SK-N-SH (cell line): ENCODE measurements at regions of chr18 and their contacts with region 1.

Region 1: GRCh38 chr18:7021994-7022840 is 95.4 kb downstream of the LAMA1 start:
- DNase-seq: peak; percentile 83
- H3K4me3 ChIP-seq: no peak overlapping the region
- H3K27ac ChIP-seq: no peak overlapping the region
- H3K4me1 ChIP-seq: peaks cover 0 to 2% of the 10 kb centered on the region in 2 experiments; a peak in 1 of 4 replicates
- H3K27me3 ChIP-seq: no peaks in the 10 kb centered on the region
- CTCF ChIP-seq: peak; percentile 44
- EP300 ChIP-seq: no peak
- RAD21 ChIP-seq: peak; percentile 88

Region 2: GRCh38 chr18:6648581-6648980 is 373.6 kb before region 1 on chr18:
- CTCF ChIA-PET with region 1: no interaction called
- POLR2A ChIA-PET with region 1: no interaction called
- DNase-seq: no peak
- H3K4me3 ChIP-seq: no peak overlapping the region
- H3K27ac ChIP-seq: no peak overlapping the region
- H3K4me1 ChIP-seq: no peaks in the 10 kb centered on the region
- H3K27me3 ChIP-seq: no peaks in the 10 kb centered on the region; the same call in 1 of the 2 replicates
- CTCF ChIP-seq: no peak
- EP300 ChIP-seq: no peak
- RAD21 ChIP-seq: no peak

Region 3: DNA sequence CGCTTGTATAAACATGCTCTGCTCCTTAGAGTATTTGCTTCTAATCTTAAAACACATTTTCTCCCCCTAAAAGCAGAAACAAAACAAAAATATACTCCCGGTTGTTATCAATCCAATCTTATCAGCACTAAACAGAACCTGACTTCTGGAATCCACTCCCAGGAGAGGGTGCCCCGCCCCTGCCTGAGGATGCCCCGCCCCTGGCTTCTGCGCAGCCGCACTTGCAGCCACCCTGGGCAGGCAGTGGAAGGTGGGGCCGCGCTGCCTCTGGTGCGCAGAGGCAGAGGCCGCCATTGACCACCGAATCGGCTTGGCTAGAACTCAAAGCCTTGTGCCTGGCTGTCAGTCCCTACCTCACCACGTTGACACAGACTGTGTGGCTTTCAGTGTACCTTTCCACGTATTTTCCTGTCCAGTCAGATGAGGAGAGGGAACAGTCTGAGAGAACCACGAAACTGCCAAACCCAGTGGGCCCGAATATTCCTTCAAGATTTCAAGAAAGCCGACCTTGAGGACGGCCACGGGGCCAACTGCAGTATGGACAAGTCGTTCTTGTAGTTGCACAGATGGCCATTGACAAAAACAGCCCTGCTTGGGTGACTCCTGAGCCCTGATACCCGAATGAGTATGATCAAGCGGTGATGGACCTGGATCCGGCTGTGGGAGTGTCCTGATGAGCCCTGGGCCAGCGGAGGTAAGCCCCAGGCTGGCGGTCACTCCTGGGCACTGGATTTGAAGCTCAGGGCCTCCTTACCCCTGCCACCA is 338.9 kb before region 1 on chr18:
- CTCF ChIA-PET with region 1: no interaction called
- POLR2A ChIA-PET with region 1: no interaction called
- DNase-seq: peak; percentile 44
- H3K4me3 ChIP-seq: no peak overlapping the region
- H3K27ac ChIP-seq: no peak overlapping the region
- H3K4me1 ChIP-seq: peaks cover 0 to 4% of the 10 kb centered on the region in 2 experiments; a peak in 1 of 4 replicates
- H3K27me3 ChIP-seq: no peaks in the 10 kb centered on the region; the same call in 1 of the 2 replicates
- CTCF ChIP-seq: no peak
- EP300 ChIP-seq: no peak
- RAD21 ChIP-seq: no peak

Region 4: GRCh38 chr18:6885992-6886796 is 136.0 kb before region 1 on chr18:
- CTCF ChIA-PET with region 1: interaction called, 11 read pairs
- POLR2A ChIA-PET with region 1: no interaction called
- DNase-seq: peak; percentile 65
- H3K4me3 ChIP-seq: no peak overlapping the region
- H3K27ac ChIP-seq: no peak overlapping the region
- H3K4me1 ChIP-seq: no peaks in the 10 kb centered on the region
- H3K27me3 ChIP-seq: no peaks in the 10 kb centered on the region
- CTCF ChIP-seq: peak; percentile 84
- EP300 ChIP-seq: no peak
- RAD21 ChIP-seq: peak; percentile 98

Region 5: GRCh38 chr18:6941996-6942395 is 80.2 kb before region 1 on chr18:
- CTCF ChIA-PET with region 1: interaction called, 10 read pairs
- POLR2A ChIA-PET with region 1: no interaction called
- DNase-seq: no peak
- H3K4me3 ChIP-seq: no peak overlapping the region
- H3K27ac ChIP-seq: no peak overlapping the region
- H3K4me1 ChIP-seq: peaks cover 0 to 7% of the 10 kb centered on the region in 2 experiments; a peak in 1 of 4 replicates
- H3K27me3 ChIP-seq: no peaks in the 10 kb centered on the region
- CTCF ChIP-seq: no peak
- EP300 ChIP-seq: no peak
- RAD21 ChIP-seq: no peak

Region 6: GRCh38 chr18:7038330-7038851 is 16.2 kb after region 1 on chr18:
- CTCF ChIA-PET with region 1: interaction called, 18 read pairs
- POLR2A ChIA-PET with region 1: no interaction called
- DNase-seq: peak; percentile 44
- H3K4me3 ChIP-seq: no peak overlapping the region; a peak in 1 of 4 replicates
- H3K27ac ChIP-seq: no peak overlapping the region
- H3K4me1 ChIP-seq: no peaks in the 10 kb centered on the region
- H3K27me3 ChIP-seq: no peaks in the 10 kb centered on the region
- CTCF ChIP-seq: peak; percentile 50
- EP300 ChIP-seq: no peak
- RAD21 ChIP-seq: peak; percentile 55

Region 7: DNA sequence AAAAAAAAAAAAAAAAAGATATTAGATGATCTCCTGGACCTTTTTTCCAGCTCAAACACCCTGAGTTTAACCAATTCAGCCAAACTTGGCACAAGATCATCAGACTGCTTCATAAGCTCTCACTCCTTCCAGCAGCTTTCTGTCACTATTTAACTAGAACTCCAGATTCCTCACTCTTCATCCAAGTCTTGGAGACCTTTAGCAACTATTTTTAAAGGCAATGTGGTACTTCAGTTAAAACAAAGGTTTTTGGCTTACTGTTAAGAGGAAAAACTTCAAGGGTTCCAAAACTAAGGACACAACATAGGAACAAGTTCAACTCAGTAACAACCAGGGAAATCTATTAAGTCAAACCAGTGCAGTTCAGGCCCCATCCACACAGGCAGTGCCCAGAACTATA is 72.2 kb after region 1 on chr18:
- CTCF ChIA-PET with region 1: no interaction called
- POLR2A ChIA-PET with region 1: no interaction called
- DNase-seq: no peak
- H3K4me3 ChIP-seq: no peak overlapping the region
- H3K27ac ChIP-seq: no peak overlapping the region
- H3K4me1 ChIP-seq: no peaks in the 10 kb centered on the region
- H3K27me3 ChIP-seq: no peaks in the 10 kb centered on the region
- CTCF ChIP-seq: no peak
- EP300 ChIP-seq: no peak
- RAD21 ChIP-seq: no peak

Region 8: GRCh38 chr18:7403950-7404349 is 381.7 kb after region 1 on chr18:
- CTCF ChIA-PET with region 1: no interaction called
- POLR2A ChIA-PET with region 1: no interaction called
- DNase-seq: no peak
- H3K4me3 ChIP-seq: no peak overlapping the region
- H3K27ac ChIP-seq: no peak overlapping the region
- H3K4me1 ChIP-seq: no peaks in the 10 kb centered on the region
- H3K27me3 ChIP-seq: no peaks in the 10 kb centered on the region
- CTCF ChIP-seq: no peak
- EP300 ChIP-seq: no peak
- RAD21 ChIP-seq: no peak